Sigmoid colon (tissue), 7 donors: ENCODE measurements at regions of chr15 and their contacts with region 1.

Region 1: GRCh38 chr15:75801859-75802593 is 41.2 kb upstream of the UBE2Q2 start:
- DNase-seq: peak; percentile 90
- H3K4me3 ChIP-seq: peak overlapping the region in 3 of 4 donors; percentile 13 to 29 (median 27)
- H3K27ac ChIP-seq: no peak overlapping the region
- H3K4me1 ChIP-seq: peaks cover 0 to 9% (median 7%) of the 10 kb centered on the region in 4 donors
- H3K27me3 ChIP-seq: peaks cover 0 to 20% (median 0%) of the 10 kb centered on the region in 3 donors
- CTCF ChIP-seq: peak; percentile 71 to 95 (median 90)
- EP300 ChIP-seq: no peak
- POLR2A ChIP-seq: no peak

Region 2: GRCh38 chr15:75732809-75733451 is 69.1 kb before region 1 on chr15:
- intact Hi-C with region 1: loop called (anchors 2 kb)
- DNase-seq: peak; percentile 89
- H3K4me3 ChIP-seq: no peak overlapping the region
- H3K27ac ChIP-seq: peak overlapping the region in 3 of 4 donors; percentile 57 to 87 (median 81)
- H3K4me1 ChIP-seq: peaks cover 0 to 57% (median 46%) of the 10 kb centered on the region in 4 donors
- H3K27me3 ChIP-seq: no peaks in the 10 kb centered on the region
- CTCF ChIP-seq: peak; percentile 93 to 98 (median 95)
- EP300 ChIP-seq: no peak
- POLR2A ChIP-seq: no peak